Sigmoid colon (tissue), 7 donors: ENCODE measurements at regions of chr21 and their contacts with region 1.

Region 1: DNA sequence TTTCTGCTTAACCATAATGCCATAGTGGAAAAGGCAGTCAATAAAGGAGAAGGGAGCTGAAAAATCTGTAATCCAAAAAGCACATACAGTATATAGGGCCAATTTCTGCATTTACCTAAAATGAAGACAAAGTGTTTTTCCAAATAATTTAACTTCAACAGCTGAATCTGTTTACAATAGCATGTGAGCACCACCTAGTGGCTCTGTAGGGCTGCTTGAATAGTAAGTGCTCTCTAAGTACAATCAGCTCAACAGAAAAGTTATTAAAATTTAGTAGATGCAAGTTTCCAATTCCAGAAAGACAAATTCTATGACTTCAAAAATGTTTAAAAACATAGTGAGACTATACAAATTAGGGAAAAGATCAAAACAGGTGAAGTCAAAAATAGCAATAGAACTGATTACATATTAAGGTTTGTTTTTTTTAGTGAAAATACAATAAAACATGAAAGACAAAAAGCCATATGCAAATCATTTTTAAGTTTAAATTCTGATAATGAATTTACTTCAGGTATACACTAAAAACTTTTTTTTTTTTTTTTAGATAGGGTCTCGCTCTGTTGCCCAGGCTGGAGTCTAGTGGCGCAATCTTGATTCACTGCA is 220.0 kb downstream of the SETD4 start:
- DNase-seq: peak; percentile 75
- H3K4me3 ChIP-seq: no peak overlapping the region
- H3K27ac ChIP-seq: no peak overlapping the region
- H3K4me1 ChIP-seq: no peaks in the 10 kb centered on the region
- H3K27me3 ChIP-seq: no peaks in the 10 kb centered on the region
- CTCF ChIP-seq: peak; percentile 27 to 73 (median 68)
- EP300 ChIP-seq: no peak
- POLR2A ChIP-seq: no peak

Region 2: GRCh38 chr21:35783721-35784120 is 56.6 kb before region 1 on chr21:
- intact Hi-C with region 1: no loop called
- DNase-seq: no peak
- H3K4me3 ChIP-seq: no peak overlapping the region
- H3K27ac ChIP-seq: no peak overlapping the region
- H3K4me1 ChIP-seq: no peaks in the 10 kb centered on the region
- H3K27me3 ChIP-seq: no peaks in the 10 kb centered on the region
- CTCF ChIP-seq: no peak
- EP300 ChIP-seq: no peak
- POLR2A ChIP-seq: no peak

Region 3: GRCh38 chr21:36028127-36029069 is 188.1 kb after region 1 on chr21:
- intact Hi-C with region 1: loop called (anchors 5 kb)
- DNase-seq: peak; percentile 89
- H3K4me3 ChIP-seq: no peak overlapping the region
- H3K27ac ChIP-seq: no peak overlapping the region
- H3K4me1 ChIP-seq: peaks cover 0 to 10% (median 7%) of the 10 kb centered on the region in 4 donors
- H3K27me3 ChIP-seq: no peaks in the 10 kb centered on the region
- CTCF ChIP-seq: peak; percentile 75 to 92 (median 86)
- EP300 ChIP-seq: no peak
- POLR2A ChIP-seq: no peak